GM12878 (cell line): ENCODE measurements at regions of chr15 and their contacts with region 1.

Region 1: DNA sequence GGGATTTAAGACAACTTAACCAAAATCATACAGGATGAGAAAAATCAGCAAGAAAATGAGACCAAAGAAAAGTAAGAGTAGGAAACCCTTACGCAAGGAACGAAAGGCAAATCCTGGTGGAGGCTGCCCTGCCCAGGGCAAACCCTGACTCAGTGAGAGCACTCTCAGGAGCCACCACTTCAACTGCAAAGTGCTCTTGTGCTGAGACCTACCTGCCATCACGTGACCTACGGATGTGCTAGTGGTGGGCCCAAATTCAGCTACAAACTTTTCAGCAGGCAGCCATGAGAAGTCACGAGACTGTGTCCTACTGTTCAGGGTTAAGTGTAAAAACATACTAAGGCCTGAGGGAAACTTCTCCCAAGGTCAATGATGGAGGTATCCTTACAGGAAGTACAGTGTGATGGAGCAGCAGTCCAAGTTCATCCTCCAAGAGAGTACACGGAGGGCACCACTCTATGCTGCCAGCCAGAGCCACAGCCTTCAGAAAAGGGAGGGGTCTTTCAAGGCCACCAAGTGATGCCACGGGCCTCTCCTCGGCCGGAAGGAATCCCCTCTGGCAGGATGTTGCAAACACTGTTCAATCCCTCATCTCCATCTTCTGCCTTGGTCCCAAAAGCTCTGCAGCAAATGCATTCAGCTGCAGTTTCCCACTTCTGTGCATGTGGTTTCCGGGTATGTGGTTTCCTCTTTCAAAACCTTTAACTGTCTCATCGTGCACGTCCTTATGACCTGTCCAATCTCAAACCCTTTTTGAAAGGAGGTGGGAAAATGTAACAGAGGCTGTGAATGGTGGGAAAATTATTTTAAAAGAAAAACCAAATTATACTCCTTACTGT is 9.5 kb downstream of the CHSY1 start:
- DNase-seq: peak; percentile 74
- ATAC-seq: peak; percentile 77
- H3K4me3 ChIP-seq: peak overlapping the region; percentile 44
- H3K27ac ChIP-seq: peak overlapping the region; percentile 69
- H3K4me1 ChIP-seq: peaks cover 43% of the 10 kb centered on the region
- H3K27me3 ChIP-seq: no peaks in the 10 kb centered on the region
- CTCF ChIP-seq: no peak
- EP300 ChIP-seq: peak in 1 of 2 experiments; percentile 74; a peak in 2 of 4 replicates
- POLR2A ChIP-seq: peak; percentile 12; the same call in 1 of the 2 replicates
- RAD21 ChIP-seq: no peak

Region 2: GRCh38 chr15:101121511-101122090 is 120.8 kb before region 1 on chr15:
- CTCF ChIA-PET with region 1: interaction called, 13 read pairs
- POLR2A ChIA-PET with region 1: interaction called, 11 read pairs
- RAD21 ChIA-PET with region 1: interaction called, 26 read pairs
- SMC1A ChIA-PET with region 1: interaction called, 119 read pairs
- in situ Hi-C with region 1: no loop called
- intact Hi-C with region 1: no loop called
- DNase-seq: no peak
- ATAC-seq: peak; percentile 79
- H3K4me3 ChIP-seq: no peak overlapping the region
- H3K27ac ChIP-seq: no peak overlapping the region
- H3K4me1 ChIP-seq: peaks cover 30% of the 10 kb centered on the region
- H3K27me3 ChIP-seq: no peaks in the 10 kb centered on the region; a peak in 1 of 4 replicates
- CTCF ChIP-seq: peak; percentile 32 to 56 (median 33); a peak in 5 of 6 replicates
- EP300 ChIP-seq: no peak
- POLR2A ChIP-seq: no peak
- RAD21 ChIP-seq: peak; percentile 54

Region 3: GRCh38 chr15:101127506-101128076 is 114.8 kb before region 1 on chr15:
- CTCF ChIA-PET with region 1: interaction called, 9 read pairs
- POLR2A ChIA-PET with region 1: interaction called, 11 read pairs
- RAD21 ChIA-PET with region 1: interaction called, 26 read pairs
- SMC1A ChIA-PET with region 1: interaction called, 119 read pairs
- in situ Hi-C with region 1: no loop called
- intact Hi-C with region 1: no loop called
- DNase-seq: peak; percentile 82
- ATAC-seq: peak; percentile 80
- H3K4me3 ChIP-seq: peak overlapping the region; percentile 44; the same call in 1 of the 2 replicates
- H3K27ac ChIP-seq: peak overlapping the region; percentile 95
- H3K4me1 ChIP-seq: peaks cover 45% of the 10 kb centered on the region
- H3K27me3 ChIP-seq: no peaks in the 10 kb centered on the region; a peak in 1 of 4 replicates
- CTCF ChIP-seq: no peak
- EP300 ChIP-seq: peak; percentile 60 to 85; a peak in 2 of 4 replicates
- POLR2A ChIP-seq: no peak
- RAD21 ChIP-seq: no peak

Region 4: GRCh38 chr15:101156509-101157159 is 85.7 kb before region 1 on chr15:
- CTCF ChIA-PET with region 1: interaction called, 3 read pairs
- POLR2A ChIA-PET with region 1: interaction called, 5 read pairs
- RAD21 ChIA-PET with region 1: interaction called, 12 read pairs
- SMC1A ChIA-PET with region 1: interaction called, 6 read pairs
- in situ Hi-C with region 1: no loop called
- intact Hi-C with region 1: no loop called
- DNase-seq: peak; percentile 84
- ATAC-seq: peak; percentile 86
- H3K4me3 ChIP-seq: no peak overlapping the region
- H3K27ac ChIP-seq: peak overlapping the region; percentile 53
- H3K4me1 ChIP-seq: peaks cover 17% of the 10 kb centered on the region
- H3K27me3 ChIP-seq: no peaks in the 10 kb centered on the region
- CTCF ChIP-seq: no peak
- EP300 ChIP-seq: peak; percentile 40 to 75; a peak in 2 of 4 replicates
- POLR2A ChIP-seq: no peak
- RAD21 ChIP-seq: no peak

Region 5: DNA sequence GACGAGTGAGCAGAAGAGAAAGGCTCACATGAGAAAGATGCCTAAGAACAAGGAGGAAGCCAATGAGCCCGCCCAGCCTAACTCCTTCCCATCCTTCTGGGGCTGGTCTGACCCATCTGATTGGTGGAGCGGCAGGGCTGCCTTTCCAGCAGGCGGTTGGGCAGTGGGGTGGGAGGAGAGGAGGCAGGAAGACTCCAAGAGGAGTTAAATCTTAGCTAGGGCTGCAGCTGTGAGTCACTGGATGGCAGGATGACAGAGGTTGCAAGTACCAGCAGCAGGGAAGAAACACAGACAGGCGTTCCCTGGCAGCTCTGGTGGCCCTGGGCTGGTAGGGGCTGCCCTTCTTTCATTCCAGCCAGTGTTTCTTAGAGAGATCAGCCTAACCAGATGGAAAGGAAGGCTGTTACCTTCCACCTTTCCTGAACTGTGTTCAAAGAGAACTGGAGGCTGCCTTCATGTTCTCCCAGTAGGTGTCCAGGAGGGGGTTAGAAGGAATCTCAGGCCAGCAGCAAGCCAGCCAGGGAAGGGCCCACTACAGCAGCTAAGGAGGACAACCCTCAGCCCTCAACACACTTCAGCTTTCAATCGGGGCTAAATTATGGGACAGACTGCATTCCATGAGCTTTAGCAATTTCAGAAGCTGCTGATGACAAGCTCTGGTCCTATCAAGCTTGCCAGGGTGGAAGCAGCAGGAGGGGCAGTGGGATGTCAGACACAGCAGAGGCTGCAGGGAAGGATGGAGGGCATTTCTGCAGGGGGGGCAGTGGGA is 40.8 kb before region 1 on chr15:
- CTCF ChIA-PET with region 1: interaction called, 10 read pairs
- POLR2A ChIA-PET with region 1: interaction called, 6 read pairs
- RAD21 ChIA-PET with region 1: interaction called, 4 read pairs
- SMC1A ChIA-PET with region 1: interaction called, 35 read pairs
- in situ Hi-C with region 1: no loop called
- intact Hi-C with region 1: loop called (anchors 2 kb)
- DNase-seq: no peak
- ATAC-seq: peak; percentile 7; the same call in 1 of the 3 replicates
- H3K4me3 ChIP-seq: no peak overlapping the region
- H3K27ac ChIP-seq: peak overlapping the region; percentile 31; the same call in 1 of the 2 replicates
- H3K4me1 ChIP-seq: peaks cover 48% of the 10 kb centered on the region
- H3K27me3 ChIP-seq: no peaks in the 10 kb centered on the region
- CTCF ChIP-seq: no peak
- EP300 ChIP-seq: no peak
- POLR2A ChIP-seq: no peak
- RAD21 ChIP-seq: no peak

Region 6: DNA sequence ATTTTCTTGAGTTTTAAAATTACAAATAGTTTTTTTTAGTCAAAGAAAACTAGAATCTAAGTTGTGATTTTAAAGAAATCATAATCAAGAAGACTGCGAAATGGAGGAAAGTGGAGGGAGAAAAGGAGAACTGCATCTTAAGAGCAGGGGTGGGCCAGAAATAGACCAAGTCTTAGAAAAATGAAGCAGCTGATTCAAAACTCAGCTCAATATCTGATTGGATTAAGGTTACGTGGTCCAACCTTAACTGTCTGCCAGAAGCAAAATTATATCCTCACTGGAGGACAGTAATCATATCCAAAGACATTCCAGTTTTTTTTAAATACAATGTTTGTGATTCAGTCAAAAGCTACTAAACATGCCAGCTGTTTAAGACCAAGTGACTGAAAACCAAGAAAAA is 31.9 kb before region 1 on chr15:
- CTCF ChIA-PET with region 1: interaction called, 7 read pairs
- POLR2A ChIA-PET with region 1: interaction called, 5 read pairs
- RAD21 ChIA-PET with region 1: interaction called, 18 read pairs
- SMC1A ChIA-PET with region 1: interaction called, 9 read pairs
- in situ Hi-C with region 1: no loop called
- intact Hi-C with region 1: no loop called
- DNase-seq: no peak
- ATAC-seq: peak; percentile 77
- H3K4me3 ChIP-seq: no peak overlapping the region
- H3K27ac ChIP-seq: peak overlapping the region; percentile 55
- H3K4me1 ChIP-seq: peaks cover 9% of the 10 kb centered on the region; the same call in 1 of the 2 replicates
- H3K27me3 ChIP-seq: no peaks in the 10 kb centered on the region
- CTCF ChIP-seq: no peak
- EP300 ChIP-seq: no peak
- POLR2A ChIP-seq: no peak
- RAD21 ChIP-seq: no peak

Region 7: DNA sequence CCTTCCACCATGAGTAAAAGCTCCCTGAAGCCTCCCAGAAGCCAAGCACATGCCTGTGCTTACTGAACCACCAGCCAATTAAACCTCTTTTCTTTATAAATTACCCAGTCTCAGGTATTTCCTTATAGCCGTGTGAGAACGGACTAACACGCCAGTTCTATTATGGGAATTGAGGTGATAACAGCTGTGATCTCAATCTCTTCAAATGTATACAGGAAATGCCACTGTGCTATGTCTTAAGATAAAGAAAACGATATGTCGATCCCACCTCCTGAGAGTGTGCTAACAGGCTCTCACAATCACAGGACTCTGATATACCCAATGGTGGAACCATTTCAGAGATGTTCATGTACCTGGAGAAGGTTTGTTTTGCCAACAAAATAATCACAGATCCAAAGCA is 16.7 kb before region 1 on chr15:
- CTCF ChIA-PET with region 1: interaction called, 5 read pairs
- POLR2A ChIA-PET with region 1: interaction called, 4 read pairs
- RAD21 ChIA-PET with region 1: interaction called, 4 read pairs
- SMC1A ChIA-PET with region 1: interaction called, 15 read pairs
- in situ Hi-C with region 1: no loop called
- intact Hi-C with region 1: no loop called
- DNase-seq: no peak
- ATAC-seq: no peak
- H3K4me3 ChIP-seq: no peak overlapping the region
- H3K27ac ChIP-seq: no peak overlapping the region
- H3K4me1 ChIP-seq: no peaks in the 10 kb centered on the region
- H3K27me3 ChIP-seq: no peaks in the 10 kb centered on the region
- CTCF ChIP-seq: no peak
- EP300 ChIP-seq: no peak
- POLR2A ChIP-seq: no peak
- RAD21 ChIP-seq: no peak

Region 8: DNA sequence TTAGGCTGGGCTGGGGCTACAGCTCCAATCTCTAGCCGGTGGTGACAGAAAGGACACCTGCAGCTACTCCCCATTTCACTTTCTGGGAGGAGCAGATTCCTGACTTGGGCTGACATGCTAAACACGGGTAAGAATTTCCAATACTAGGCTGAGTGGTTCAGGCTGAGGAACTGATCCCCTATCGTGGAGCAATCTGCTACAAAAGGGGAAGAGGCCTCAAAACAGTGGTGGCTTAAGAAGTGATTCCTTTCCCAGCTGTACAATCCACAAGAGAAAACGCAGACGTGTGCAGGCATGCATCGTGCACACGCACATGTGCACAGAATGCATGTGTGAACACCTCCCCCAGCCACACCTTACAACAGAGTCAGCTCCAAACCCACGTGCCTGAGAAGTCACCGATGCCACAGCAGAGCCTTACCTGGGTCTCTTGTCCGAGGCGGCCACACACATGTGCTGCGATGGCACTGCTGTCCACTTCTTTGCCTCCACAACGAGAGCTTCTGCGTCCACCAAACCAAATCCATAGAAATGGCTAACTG is 139.4 kb after region 1 on chr15:
- CTCF ChIA-PET with region 1: no interaction called
- POLR2A ChIA-PET with region 1: no interaction called
- RAD21 ChIA-PET with region 1: no interaction called
- SMC1A ChIA-PET with region 1: no interaction called
- in situ Hi-C with region 1: no loop called
- intact Hi-C with region 1: no loop called
- DNase-seq: no peak
- ATAC-seq: no peak
- H3K4me3 ChIP-seq: no peak overlapping the region
- H3K27ac ChIP-seq: no peak overlapping the region
- H3K4me1 ChIP-seq: no peaks in the 10 kb centered on the region
- H3K27me3 ChIP-seq: peaks cover 0 to 5% of the 10 kb centered on the region in 2 experiments; a peak in 1 of 4 replicates
- CTCF ChIP-seq: no peak
- EP300 ChIP-seq: no peak
- POLR2A ChIP-seq: no peak
- RAD21 ChIP-seq: no peak